ENCODE measurements at regions of chrX and their contacts with region 1.

Region 1: GRCh38 chrX:46961574-46962283 is 49.5 kb downstream of the JADE3 start:
- DNase-seq: peak; percentile 57
- H3K4me3 ChIP-seq: peak overlapping the region; percentile 57
- H3K27ac ChIP-seq: peak overlapping the region; percentile 83
- H3K4me1 ChIP-seq: peaks cover 86% of the 10 kb centered on the region
- CTCF ChIP-seq: no peak

Region 2: DNA sequence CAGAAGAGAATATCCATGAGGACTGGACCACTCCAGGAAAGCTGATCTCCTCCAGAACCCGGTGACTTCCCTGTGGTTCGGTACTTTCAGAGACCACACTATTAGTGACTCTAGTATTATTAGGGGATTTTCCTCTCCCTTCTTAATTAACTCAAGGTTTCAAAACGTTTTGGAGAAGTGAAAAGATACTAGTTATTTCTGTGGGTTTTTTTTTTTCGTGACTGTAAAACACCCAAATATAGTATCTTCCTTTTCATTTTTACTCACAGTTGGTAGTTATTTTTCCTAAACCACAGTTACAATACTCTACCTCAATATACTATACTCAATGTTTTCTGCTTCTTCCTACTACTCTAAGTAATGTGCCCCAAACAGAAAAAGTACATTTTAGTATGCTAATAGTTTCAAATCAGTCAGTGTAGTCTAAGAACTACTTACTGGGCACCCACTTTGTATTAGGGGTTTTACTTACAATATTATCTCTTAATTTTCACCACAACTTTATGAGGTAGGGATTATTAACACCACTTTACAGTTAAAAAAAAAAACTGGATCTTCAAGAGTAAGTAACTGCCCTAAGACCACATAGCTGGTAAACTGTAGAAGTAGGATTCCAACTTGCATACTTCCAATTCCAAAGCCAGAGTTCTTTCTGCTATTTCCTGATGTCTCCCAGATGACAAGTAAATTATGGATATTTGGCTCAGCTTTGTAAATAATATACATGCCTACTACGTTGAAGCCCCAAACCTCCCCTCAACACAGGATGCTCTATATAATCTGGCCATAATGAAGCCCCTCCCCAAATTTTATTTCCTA is 247.8 kb before region 1 on chrX:
- CTCF ChIA-PET with region 1: no interaction called
- POLR2A ChIA-PET with region 1: no interaction called
- intact Hi-C with region 1: loop called (anchors 5 kb)
- DNase-seq: no peak
- H3K4me3 ChIP-seq: peak overlapping the region; percentile 56
- H3K27ac ChIP-seq: peak overlapping the region; percentile 93
- H3K4me1 ChIP-seq: peaks cover 84% of the 10 kb centered on the region
- CTCF ChIP-seq: no peak

Region 3: DNA sequence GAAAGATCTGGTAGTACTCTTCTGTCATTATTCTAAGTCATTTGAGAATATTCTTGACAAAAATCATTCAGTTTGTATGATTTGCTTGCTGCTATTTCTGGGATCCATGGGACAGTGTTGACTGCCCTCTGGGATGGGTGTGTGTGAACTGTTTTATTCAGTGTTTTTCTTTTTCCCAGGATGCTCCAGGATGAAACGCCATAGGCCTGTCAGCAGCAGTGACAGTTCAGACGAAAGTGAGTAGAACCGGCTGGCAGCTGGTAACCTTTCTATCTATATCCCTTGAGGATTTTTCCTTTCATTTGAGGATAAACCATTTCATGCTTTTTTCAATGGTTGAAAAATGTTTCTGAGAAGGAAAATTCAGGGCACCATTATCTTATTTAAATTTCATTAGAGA is 23.0 kb after region 1 on chrX:
- CTCF ChIA-PET with region 1: no interaction called
- POLR2A ChIA-PET with region 1: no interaction called
- intact Hi-C with region 1: no loop called
- DNase-seq: no peak
- H3K4me3 ChIP-seq: no peak overlapping the region
- H3K27ac ChIP-seq: no peak overlapping the region
- H3K4me1 ChIP-seq: no peaks in the 10 kb centered on the region
- CTCF ChIP-seq: no peak

Region 4: DNA sequence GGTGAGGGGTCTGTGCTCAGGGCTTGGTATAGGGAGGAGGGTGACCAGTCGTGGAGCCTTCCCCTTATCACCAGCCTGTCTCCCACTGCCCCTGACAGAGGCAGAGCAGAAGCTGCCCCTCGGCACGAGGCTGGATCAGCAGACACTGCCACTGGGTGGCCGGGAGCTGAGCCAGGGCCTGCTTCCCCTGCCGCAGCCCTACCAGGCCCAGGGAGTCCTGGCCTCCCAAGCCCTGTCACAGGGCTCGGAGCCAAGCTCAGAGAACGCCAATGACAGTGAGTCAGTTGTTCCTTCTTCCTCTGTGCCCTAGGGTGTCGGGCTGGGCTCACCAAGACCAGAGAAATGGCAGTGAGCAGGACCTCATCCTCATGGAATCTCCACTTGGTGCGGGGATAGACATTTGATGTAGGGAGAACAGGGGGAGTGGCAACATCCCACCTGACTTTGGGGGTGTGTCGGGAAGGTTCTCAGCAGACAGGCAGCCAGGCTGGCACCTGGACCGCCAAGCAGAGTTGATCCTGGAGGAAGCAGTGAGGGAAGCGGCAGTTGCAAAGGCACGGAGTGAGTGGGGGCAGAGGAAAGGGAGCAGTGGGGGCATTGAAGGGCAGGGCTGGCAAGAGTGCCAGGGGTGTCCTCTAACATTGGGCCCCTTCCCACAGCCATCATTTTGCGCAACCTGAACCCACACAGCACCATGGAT is 217.6 kb after region 1 on chrX:
- CTCF ChIA-PET with region 1: no interaction called
- POLR2A ChIA-PET with region 1: no interaction called
- intact Hi-C with region 1: no loop called
- DNase-seq: no peak
- H3K4me3 ChIP-seq: no peak overlapping the region
- H3K27ac ChIP-seq: no peak overlapping the region
- H3K4me1 ChIP-seq: no peaks in the 10 kb centered on the region
- CTCF ChIP-seq: no peak